HepG2 (cell line): ENCODE measurements at regions of chr17 and their contacts with region 1.

Region 1: DNA sequence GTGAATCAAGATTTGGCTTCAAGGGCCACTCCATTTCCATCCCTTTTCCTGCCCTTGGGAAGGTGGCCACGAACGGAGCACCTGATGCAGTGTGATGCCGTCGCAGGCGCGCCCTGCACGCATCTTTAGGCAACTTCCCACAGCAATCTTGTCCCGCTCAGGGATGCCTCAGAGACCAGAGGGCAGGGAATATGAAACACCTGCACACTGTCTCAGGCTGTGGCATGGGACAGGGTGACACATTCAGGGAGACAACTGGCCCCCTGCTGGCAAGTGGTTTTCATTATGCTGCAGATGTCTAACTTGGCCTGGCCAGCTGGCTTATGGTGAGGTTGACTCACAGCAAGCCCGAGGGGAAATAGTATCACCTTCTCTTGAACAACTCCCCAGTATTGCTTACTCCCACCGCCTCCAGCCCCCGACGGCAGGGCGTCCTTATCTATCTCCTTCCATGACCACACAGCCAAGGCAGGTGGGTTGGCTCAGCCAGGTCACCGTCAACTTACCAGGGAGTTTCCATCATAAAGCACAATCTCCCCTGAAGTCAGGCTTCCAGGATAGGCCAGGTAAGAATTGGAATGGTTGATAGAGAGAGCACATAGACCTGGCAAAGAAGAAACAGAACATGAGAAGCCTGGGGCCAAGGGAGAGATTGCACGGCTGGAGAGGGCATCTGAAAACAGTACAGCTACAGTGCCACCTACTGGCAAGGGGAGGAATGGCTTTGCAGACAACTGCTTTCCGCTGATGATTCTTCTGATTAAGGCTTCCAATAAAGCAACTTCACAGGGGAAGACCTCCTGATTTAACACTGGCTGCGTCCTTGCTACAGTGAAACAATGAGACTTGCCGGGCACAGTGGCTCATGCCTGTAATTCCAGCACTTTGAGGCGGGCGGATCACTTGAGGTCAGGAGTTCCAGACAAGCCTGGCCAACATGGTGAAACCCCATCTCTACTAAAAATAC is 21.1 kb downstream of the WIPI1 start:
- DNase-seq: peak; percentile 79
- ATAC-seq: peak; percentile 81
- H3K4me3 ChIP-seq: no peak overlapping the region
- H3K27ac ChIP-seq: no peak overlapping the region
- H3K4me1 ChIP-seq: peaks cover 41% of the 10 kb centered on the region
- H3K27me3 ChIP-seq: no peaks in the 10 kb centered on the region
- CTCF ChIP-seq: peak; percentile 95
- EP300 ChIP-seq: no peak
- POLR2A ChIP-seq: no peak
- RAD21 ChIP-seq: peak; percentile 75

Region 2: DNA sequence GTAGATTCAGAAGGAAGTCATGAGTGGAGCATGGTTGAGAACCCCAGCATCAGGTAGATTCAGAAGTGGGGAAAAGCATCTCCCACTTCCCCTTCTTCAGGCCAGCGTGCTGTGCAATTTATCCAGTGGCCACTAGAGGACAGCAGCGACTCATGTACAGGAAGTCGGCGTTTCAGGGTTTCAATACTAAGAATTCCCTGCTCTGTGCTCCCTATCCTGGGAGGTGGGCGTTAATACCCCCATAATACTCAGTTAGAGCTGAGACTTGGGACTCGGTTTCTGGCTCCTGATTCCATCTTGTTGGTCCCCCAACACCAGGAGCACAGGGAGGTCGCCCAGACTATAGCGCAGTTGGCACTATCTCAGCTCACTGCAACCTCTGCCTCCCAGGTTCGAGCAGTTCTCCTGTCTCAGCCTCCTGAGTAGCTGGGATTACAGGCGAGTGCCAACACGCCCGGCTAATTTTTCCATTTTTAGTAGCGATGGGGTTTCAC is 263.7 kb before region 1 on chr17:
- CTCF ChIA-PET with region 1: interaction called, 7 read pairs
- POLR2A ChIA-PET with region 1: no interaction called
- in situ Hi-C with region 1: no loop called
- intact Hi-C with region 1: loop called (anchors 1 kb)
- DNase-seq: peak; percentile 67
- ATAC-seq: peak; percentile 68
- H3K4me3 ChIP-seq: no peak overlapping the region
- H3K27ac ChIP-seq: no peak overlapping the region
- H3K4me1 ChIP-seq: peaks cover 37% of the 10 kb centered on the region
- H3K27me3 ChIP-seq: peaks cover 0 to 9% of the 10 kb centered on the region in 2 experiments; a peak in 2 of 5 replicates
- CTCF ChIP-seq: peak; percentile 97
- EP300 ChIP-seq: no peak
- POLR2A ChIP-seq: no peak
- RAD21 ChIP-seq: peak; percentile 94

Region 3: DNA sequence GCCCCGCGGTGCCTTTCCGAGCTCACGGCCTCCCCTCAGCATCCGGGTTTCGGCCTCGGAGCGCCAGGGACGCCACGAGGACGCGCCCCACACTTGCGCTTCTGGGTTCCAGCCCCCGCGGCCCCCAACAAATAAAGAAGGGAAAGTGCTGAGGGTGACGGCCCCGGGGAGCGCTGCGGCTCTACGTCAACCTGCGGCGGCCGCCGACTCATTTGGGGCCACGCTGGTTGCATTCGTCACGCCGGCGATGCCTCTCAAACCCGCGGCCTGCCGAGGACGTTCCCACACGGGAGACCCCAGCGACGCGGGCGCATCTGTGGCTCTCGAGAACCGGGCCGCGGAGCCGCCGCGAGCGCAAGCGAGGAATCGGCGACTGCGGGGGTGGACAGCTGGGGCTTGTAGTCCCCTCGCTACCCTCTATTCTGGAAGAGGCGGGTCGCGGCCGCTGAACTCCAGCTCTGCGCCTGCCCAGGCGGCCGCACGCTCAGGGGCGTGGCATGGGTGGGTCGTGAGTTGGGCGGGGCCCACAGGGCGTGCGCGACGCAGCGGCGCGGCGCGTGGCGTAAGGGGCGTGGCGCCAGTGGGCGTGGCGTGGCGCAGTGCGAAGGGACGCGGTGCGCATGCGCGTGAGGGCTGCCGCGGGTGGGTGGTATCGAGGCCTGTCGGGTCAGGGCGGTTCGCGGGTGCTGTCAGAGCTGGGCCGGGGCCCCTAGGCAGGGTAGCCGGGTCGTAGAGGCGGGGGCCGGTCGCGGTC is 188.5 kb before region 1 on chr17 and contains the start of gene AMZ2:
- CTCF ChIA-PET with region 1: no interaction called
- POLR2A ChIA-PET with region 1: interaction called, 13 read pairs
- in situ Hi-C with region 1: no loop called
- intact Hi-C with region 1: no loop called
- DNase-seq: peak; percentile 88
- ATAC-seq: peak; percentile 99
- H3K4me3 ChIP-seq: peak within 1 kb of the TSS; percentile 77 to 94 (median 80)
- H3K27ac ChIP-seq: peak within 1 kb of the TSS; percentile 77
- H3K4me1 ChIP-seq: peaks cover 27% of the 10 kb centered on the region
- H3K27me3 ChIP-seq: no peaks in the 10 kb centered on the region; a peak in 2 of 5 replicates
- CTCF ChIP-seq: peak; percentile 29
- EP300 ChIP-seq: no peak
- POLR2A ChIP-seq: peak; percentile 90 to 93
- RAD21 ChIP-seq: peak; percentile 44
- total RNA-seq, gene AMZ2: 86.9 and 99.9 TPM in 2 replicates

Region 4: DNA sequence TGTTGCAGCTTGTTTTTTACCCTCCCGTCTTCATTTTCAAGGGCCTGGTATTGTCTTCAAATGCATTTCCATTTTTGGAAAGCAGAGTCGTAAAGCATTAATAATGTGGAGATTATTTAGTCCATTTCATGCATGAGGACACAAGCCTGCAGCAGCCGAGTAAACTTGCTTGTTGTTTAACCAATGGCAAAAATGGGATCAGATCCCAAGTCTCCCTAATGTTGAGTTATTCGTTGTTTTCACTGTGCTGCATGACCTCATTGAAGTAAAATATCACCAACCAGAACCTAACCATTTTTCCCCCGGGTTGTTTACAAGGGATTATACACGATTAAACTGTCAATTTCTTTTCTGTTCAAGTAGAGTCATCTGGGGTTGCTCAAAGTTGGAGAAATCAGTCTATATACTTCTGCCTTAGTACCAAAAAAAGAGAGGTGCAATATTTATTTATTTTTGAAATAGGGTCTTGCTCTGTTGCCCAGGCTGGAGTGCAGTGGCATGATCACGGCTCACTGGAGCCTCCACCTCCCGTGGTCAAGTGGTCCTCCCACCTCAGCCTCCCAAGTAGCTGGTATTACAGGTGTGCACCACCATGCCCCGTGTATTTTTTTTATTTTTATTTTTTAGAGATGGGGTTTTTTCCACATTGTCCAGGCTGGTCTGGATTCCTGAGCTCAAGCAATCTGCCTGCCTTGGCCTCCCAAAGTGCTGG is 176.0 kb before region 1 on chr17:
- CTCF ChIA-PET with region 1: interaction called, 49 read pairs
- POLR2A ChIA-PET with region 1: interaction called, 3 read pairs
- in situ Hi-C with region 1: loop called (anchors 5 kb)
- intact Hi-C with region 1: loop called (anchors 1 kb)
- DNase-seq: no peak
- ATAC-seq: no peak
- H3K4me3 ChIP-seq: no peak overlapping the region
- H3K27ac ChIP-seq: no peak overlapping the region
- H3K4me1 ChIP-seq: peaks cover 31% of the 10 kb centered on the region
- H3K27me3 ChIP-seq: no peaks in the 10 kb centered on the region
- CTCF ChIP-seq: no peak
- EP300 ChIP-seq: no peak
- POLR2A ChIP-seq: no peak
- RAD21 ChIP-seq: no peak

Region 5: GRCh38 chr17:68375566-68375965 is 60.6 kb before region 1 on chr17:
- CTCF ChIA-PET with region 1: no interaction called
- POLR2A ChIA-PET with region 1: no interaction called
- in situ Hi-C with region 1: no loop called
- intact Hi-C with region 1: no loop called
- DNase-seq: no peak
- ATAC-seq: no peak
- H3K4me3 ChIP-seq: no peak overlapping the region
- H3K27ac ChIP-seq: no peak overlapping the region
- H3K4me1 ChIP-seq: peaks cover 48% of the 10 kb centered on the region
- H3K27me3 ChIP-seq: no peaks in the 10 kb centered on the region
- CTCF ChIP-seq: no peak
- EP300 ChIP-seq: no peak
- POLR2A ChIP-seq: no peak
- RAD21 ChIP-seq: no peak

Region 6: GRCh38 chr17:68812876-68813584 is 376.9 kb after region 1 on chr17:
- CTCF ChIA-PET with region 1: no interaction called
- POLR2A ChIA-PET with region 1: no interaction called
- in situ Hi-C with region 1: no loop called
- intact Hi-C with region 1: no loop called
- DNase-seq: no peak
- ATAC-seq: no peak
- H3K4me3 ChIP-seq: no peak overlapping the region
- H3K27ac ChIP-seq: no peak overlapping the region
- H3K4me1 ChIP-seq: peaks cover 12% of the 10 kb centered on the region
- H3K27me3 ChIP-seq: no peaks in the 10 kb centered on the region
- CTCF ChIP-seq: no peak
- EP300 ChIP-seq: no peak
- POLR2A ChIP-seq: no peak
- RAD21 ChIP-seq: no peak